MCF 10A (cell line): ENCODE measurements at regions of chr10 and their contacts with region 1.

Region 1: GRCh38 chr10:3095373-3096139 is 28.2 kb downstream of the PFKP start:
- DNase-seq: peak; percentile 97
- H3K4me3 Mint-ChIP-seq: peak overlapping the region; percentile 56
- H3K27ac Mint-ChIP-seq: peak overlapping the region; percentile 93
- H3K4me1 Mint-ChIP-seq: peaks cover 52% of the 10 kb centered on the region
- H3K27me3 Mint-ChIP-seq: no peaks in the 10 kb centered on the region
- CTCF ChIP-seq: no peak

Region 2: DNA sequence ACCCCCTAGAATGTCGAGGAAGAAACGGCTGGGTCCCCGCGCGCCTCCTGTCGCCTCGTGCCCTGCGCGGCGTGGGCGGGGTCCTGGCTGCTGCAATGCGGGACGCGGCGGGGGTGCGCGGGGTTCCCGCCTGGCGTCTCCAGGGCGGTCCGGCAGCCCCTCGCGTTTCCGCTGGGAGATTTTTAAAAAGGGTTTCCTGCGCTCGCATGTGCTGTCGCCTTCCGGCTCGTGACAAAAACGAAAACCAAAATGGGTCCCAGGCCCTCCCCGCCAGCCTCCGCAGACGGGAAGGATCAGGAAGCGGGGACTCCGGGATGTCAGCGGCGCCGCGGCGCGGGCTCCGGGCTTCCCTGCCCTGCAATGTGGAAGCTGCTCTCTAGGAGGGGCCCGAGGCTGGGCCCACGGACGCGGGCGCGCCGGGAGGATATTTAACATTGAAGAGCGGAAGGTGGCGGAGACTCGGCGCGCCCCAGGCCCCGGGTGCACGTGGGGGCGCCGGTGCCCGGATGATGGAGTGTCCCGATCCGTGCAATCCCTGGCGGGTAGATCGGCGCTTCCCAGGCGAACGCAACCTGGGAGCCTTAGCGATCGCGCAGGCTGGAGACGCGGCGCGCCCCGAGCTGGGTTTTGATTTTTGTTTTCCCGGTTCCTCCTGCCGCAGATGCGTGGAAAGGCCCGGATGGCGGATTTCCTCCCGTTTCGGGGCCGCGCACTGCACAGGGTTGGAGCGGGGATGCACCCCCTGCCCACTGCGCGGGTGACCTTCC is 27.2 kb before region 1 on chr10:
- CTCF ChIA-PET with region 1: interaction called, 7 read pairs
- POLR2A ChIA-PET with region 1: interaction called, 86 read pairs
- intact Hi-C with region 1: loop called (anchors 1 kb)
- DNase-seq: peak; percentile 50
- H3K4me3 Mint-ChIP-seq: peak overlapping the region; percentile 91
- H3K27ac Mint-ChIP-seq: peak overlapping the region; percentile 39
- H3K4me1 Mint-ChIP-seq: peaks cover 25% of the 10 kb centered on the region
- H3K27me3 Mint-ChIP-seq: no peaks in the 10 kb centered on the region
- CTCF ChIP-seq: peak; percentile 14

Region 3: GRCh38 chr10:3077975-3078921 is 17.3 kb before region 1 on chr10:
- CTCF ChIA-PET with region 1: interaction called, 5 read pairs
- POLR2A ChIA-PET with region 1: interaction called, 86 read pairs
- intact Hi-C with region 1: no loop called
- DNase-seq: no peak
- H3K4me3 Mint-ChIP-seq: no peak overlapping the region
- H3K27ac Mint-ChIP-seq: no peak overlapping the region
- H3K4me1 Mint-ChIP-seq: peaks cover 14% of the 10 kb centered on the region
- H3K27me3 Mint-ChIP-seq: no peaks in the 10 kb centered on the region
- CTCF ChIP-seq: no peak

Region 4: DNA sequence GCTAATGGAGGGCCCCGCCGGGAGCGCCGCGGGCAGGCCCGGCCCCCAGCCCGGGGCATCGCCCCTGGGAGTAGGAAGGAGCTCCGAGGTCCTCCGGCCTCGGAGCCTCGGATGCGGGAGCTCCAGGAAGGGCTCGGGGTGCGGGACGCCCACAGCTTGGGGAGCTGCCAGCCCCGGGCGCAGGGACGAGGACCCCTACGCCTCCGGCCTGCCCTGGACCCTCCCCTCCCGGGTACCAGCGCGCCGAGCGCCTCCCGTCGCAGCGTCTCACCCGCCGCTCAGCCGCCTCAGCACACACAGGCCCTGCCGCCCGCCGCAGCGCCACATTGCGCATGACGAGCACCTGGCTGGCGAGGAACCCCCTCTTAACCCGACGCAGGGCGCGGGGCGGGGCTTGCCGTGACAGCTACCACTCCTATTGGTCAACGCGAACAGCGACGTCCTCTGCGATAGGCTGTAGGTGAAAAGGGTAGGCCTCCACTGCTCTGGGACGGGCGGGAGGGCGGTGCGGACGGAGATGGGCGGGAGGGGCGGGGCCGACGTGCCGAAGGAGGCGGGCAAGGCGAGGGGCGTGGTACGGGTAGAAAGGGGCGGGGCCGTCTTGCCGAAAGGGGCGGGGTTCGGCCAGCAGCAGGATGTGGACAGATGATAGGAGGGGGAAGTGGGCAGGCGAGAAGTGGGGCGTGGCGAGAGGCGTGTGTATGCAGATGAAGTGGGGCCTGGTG is 77.1 kb after region 1 on chr10 and contains the start of gene PITRM1:
- CTCF ChIA-PET with region 1: no interaction called
- POLR2A ChIA-PET with region 1: interaction called, 17 read pairs
- intact Hi-C with region 1: loop called (anchors 2 kb)
- DNase-seq: peak; percentile 99
- H3K4me3 Mint-ChIP-seq: peak within 1 kb of the TSS; percentile 78
- H3K27ac Mint-ChIP-seq: peak within 1 kb of the TSS; percentile 55
- H3K4me1 Mint-ChIP-seq: peaks cover 17% of the 10 kb centered on the region
- H3K27me3 Mint-ChIP-seq: no peaks in the 10 kb centered on the region
- CTCF ChIP-seq: no peak
- total RNA-seq, gene PITRM1: 132 and 136 TPM in 2 replicates

Region 5: DNA sequence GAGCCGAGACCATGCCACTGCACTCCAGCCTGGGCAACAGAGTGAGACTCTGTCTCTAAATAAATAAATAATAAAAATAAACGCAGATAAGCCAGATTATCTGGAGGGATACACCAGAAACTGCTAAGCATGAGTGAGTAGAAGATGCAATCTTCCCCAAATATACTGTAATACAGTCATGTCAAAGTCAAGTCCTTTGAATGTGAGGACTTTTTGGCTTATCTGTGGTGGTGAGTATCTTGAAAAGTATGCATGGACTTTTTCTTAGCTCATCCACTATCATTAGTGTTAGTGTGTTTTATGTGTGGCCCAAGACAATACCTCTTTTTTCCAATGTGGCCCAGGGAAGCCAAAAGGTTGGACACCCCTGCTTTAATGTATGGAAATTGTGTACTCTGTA is 121.7 kb after region 1 on chr10:
- CTCF ChIA-PET with region 1: no interaction called
- POLR2A ChIA-PET with region 1: no interaction called
- intact Hi-C with region 1: no loop called
- DNase-seq: no peak
- H3K4me3 Mint-ChIP-seq: no peak overlapping the region
- H3K27ac Mint-ChIP-seq: no peak overlapping the region
- H3K4me1 Mint-ChIP-seq: no peaks in the 10 kb centered on the region
- H3K27me3 Mint-ChIP-seq: no peaks in the 10 kb centered on the region
- CTCF ChIP-seq: no peak